Activated T-helper 1 cell treated with anti-CD3 and anti-CD28 coated beads, Interleukin-12 subunit alpha, Interleukin-12 subunit beta, Interleukin-2, Interleukin-4 antibody, amounts not matched to agents 30 ng/mL and 10 ng/mL and 1 ng/mL, durations not matched to agents 14 hours and 24 hours and 36 hours (primary cell): ENCODE measurements at regions of chr15 and their contacts with region 1.

Region 1: GRCh38 chr15:56491110-56491722 is 26.3 kb upstream of the MNS1 start:
- DNase-seq: peak; percentile 43
- H3K4me3 Mint-ChIP-seq: no peak overlapping the region
- H3K27ac Mint-ChIP-seq: no peak overlapping the region
- H3K4me1 Mint-ChIP-seq: no peaks in the 10 kb centered on the region
- H3K27me3 Mint-ChIP-seq: no peaks in the 10 kb centered on the region

Region 2: GRCh38 chr15:56616529-56616928 is 125.3 kb after region 1 on chr15:
- intact Hi-C with region 1: no loop called
- DNase-seq: no peak
- H3K4me3 Mint-ChIP-seq: no peak overlapping the region
- H3K27ac Mint-ChIP-seq: no peak overlapping the region
- H3K4me1 Mint-ChIP-seq: peaks cover 14% of the 10 kb centered on the region
- H3K27me3 Mint-ChIP-seq: peaks cover 15% of the 10 kb centered on the region

Region 3: GRCh38 chr15:56869573-56869972 is 378.4 kb after region 1 on chr15:
- intact Hi-C with region 1: loop called (anchors 1 kb)
- DNase-seq: peak; percentile 8
- H3K4me3 Mint-ChIP-seq: no peak overlapping the region
- H3K27ac Mint-ChIP-seq: no peak overlapping the region
- H3K4me1 Mint-ChIP-seq: no peaks in the 10 kb centered on the region
- H3K27me3 Mint-ChIP-seq: peaks cover 12% of the 10 kb centered on the region

Region 4: GRCh38 chr15:57017024-57017423 is 525.8 kb after region 1 on chr15:
- intact Hi-C with region 1: loop called (anchors 10 kb)
- DNase-seq: no peak
- H3K4me3 Mint-ChIP-seq: no peak overlapping the region
- H3K27ac Mint-ChIP-seq: no peak overlapping the region
- H3K4me1 Mint-ChIP-seq: peaks cover 8% of the 10 kb centered on the region
- H3K27me3 Mint-ChIP-seq: no peaks in the 10 kb centered on the region